ENCODE measurements at regions of chr5 and their contacts with region 1.

Region 1: DNA sequence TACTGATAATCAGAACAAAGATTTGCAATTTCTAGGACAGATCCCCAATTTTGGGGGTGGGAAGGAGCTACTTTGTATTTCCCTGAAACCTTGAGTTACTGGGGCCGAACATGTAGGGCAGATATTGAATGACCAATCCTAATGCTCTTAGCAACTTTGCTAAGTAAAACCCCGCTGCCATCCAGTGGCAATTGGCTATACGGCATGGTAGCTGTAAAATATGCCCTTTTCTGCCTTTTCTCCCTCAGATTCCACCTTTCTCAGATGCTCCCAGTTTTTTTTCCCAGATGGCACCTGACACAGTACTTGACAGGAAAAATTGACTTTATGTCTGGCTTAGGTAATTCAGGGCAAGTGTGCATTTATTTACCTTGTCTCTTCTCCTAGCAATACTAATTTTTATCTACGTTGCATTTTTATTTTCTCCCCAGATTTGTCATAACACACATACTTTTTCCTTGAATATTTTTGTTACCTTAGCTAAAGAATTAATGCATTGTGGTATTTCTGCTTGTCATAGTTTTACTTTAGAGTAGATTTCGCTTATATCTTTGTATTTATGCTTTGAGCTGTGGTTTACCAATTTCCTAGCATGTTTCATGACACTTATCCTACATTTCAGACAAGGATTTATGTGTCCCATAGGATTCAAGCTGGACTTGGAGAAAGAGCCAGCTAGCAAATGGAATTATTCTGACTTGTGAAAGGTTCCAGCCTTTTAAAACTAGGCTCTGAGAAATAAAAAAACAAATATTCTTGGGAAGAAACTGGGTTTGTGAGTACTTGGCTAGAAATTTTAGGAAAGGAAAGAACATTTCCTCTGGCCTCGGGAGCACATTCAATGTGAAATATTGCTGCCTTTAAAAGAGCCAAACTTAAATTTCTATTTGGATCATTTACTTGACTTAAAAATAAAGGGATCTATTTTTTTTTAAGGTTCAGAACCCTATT is 37.4 kb downstream of the PIK3R1 start:
- DNase-seq: peak; percentile 65
- ATAC-seq: peak; percentile 65
- H3K4me3 ChIP-seq: no peak overlapping the region
- H3K4me3 Mint-ChIP-seq: no peak overlapping the region
- H3K27ac ChIP-seq: no peak overlapping the region
- H3K27ac Mint-ChIP-seq: no peak overlapping the region
- H3K4me1 ChIP-seq: peaks cover 38% of the 10 kb centered on the region in 2 donors
- H3K4me1 Mint-ChIP-seq: peaks cover 78% of the 10 kb centered on the region
- H3K27me3 ChIP-seq: no peaks in the 10 kb centered on the region
- H3K27me3 Mint-ChIP-seq: no peaks in the 10 kb centered on the region
- CTCF ChIP-seq: peak; percentile 84

Region 2: DNA sequence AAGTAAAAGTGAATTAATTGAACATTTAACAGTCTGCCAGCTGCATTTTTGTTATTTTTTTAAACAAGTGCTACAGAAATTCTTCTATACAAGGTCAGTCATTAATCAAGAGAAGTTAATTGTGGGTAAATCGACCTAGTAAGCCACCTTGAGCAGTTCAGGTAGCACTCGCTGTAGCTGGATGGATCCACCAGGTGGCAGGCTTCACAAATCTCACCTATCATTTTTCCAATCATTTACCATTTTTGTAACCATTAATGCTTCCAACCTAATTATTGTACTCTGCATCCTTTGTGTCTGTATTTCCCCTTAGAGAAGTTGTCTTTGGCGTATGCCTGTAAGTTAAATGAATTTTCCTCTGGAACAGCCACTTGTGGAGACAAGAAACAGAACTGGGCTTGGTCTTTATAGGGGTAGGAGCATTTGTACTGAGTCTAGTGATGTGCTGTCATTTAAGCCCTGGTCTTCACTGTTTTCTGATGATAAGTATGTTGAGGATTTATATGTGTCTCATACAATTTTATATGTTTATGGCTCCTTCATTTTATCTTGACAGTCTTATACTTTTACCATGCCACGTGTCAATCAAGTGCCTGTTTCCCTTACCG is 1095.9 kb before region 1 on chr5:
- CTCF ChIA-PET with region 1: interaction called, 10 read pairs
- POLR2A ChIA-PET with region 1: no interaction called
- intact Hi-C with region 1: no loop called
- DNase-seq: peak; percentile 69
- ATAC-seq: peak; percentile 69
- H3K4me3 ChIP-seq: no peak overlapping the region
- H3K4me3 Mint-ChIP-seq: no peak overlapping the region
- H3K27ac ChIP-seq: no peak overlapping the region
- H3K27ac Mint-ChIP-seq: peak overlapping the region; percentile 46
- H3K4me1 ChIP-seq: peaks cover 3 to 6% of the 10 kb centered on the region in 2 donors
- H3K4me1 Mint-ChIP-seq: peaks cover 17% of the 10 kb centered on the region
- H3K27me3 ChIP-seq: no peaks in the 10 kb centered on the region
- H3K27me3 Mint-ChIP-seq: no peaks in the 10 kb centered on the region
- CTCF ChIP-seq: peak; percentile 95

Region 3: DNA sequence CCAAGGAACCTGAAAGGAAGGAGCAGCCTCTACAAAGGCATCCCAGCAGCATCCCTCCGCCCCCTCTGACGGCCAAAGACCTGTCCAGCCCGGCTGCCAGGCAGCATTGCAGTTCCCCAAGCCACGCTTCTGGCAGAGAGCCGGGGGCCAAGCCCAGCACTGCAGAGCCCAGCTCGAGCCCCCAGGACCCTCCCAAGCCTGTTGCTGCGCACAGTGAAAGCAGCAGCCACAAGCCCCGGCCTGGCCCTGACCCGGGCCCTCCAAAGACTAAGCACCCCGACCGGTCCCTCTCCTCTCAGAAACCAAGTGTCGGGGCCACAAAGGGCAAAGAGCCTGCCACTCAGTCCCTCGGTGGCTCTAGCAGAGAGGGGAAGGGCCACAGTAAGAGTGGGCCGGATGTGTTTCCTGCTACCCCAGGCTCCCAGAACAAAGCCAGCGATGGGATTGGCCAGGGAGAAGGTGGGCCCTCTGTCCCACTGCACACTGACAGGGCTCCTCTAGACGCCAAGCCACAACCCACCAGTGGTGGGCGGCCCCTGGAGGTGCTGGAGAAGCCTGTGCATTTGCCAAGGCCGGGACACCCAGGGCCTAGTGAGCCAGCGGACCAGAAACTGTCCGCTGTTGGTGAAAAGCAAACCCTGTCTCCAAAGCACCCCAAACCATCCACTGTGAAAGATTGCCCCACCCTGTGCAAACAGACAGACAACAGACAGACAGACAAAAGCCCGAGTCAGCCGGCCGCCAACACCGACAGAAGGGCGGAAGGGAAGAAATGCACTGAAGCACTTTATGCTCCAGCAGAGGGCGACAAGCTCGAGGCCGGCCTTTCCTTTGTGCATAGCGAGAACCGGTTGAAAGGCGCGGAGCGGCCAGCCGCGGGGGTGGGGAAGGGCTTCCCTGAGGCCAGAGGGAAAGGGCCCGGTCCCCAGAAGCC is 1087.2 kb before region 1 on chr5:
- CTCF ChIA-PET with region 1: no interaction called
- POLR2A ChIA-PET with region 1: no interaction called
- intact Hi-C with region 1: loop called (anchors 5 kb)
- DNase-seq: peak; percentile 87
- ATAC-seq: peak; percentile 83
- H3K4me3 ChIP-seq: peak overlapping the region in 4 of 5 experiments; percentile 38 to 63 (median 55)
- H3K4me3 Mint-ChIP-seq: peak overlapping the region; percentile 89
- H3K27ac ChIP-seq: peak overlapping the region; percentile 78 to 83
- H3K27ac Mint-ChIP-seq: peak overlapping the region; percentile 97
- H3K4me1 ChIP-seq: peaks cover 26 to 34% of the 10 kb centered on the region in 2 donors
- H3K4me1 Mint-ChIP-seq: peaks cover 27% of the 10 kb centered on the region
- H3K27me3 ChIP-seq: no peaks in the 10 kb centered on the region
- H3K27me3 Mint-ChIP-seq: no peaks in the 10 kb centered on the region
- CTCF ChIP-seq: peak; percentile 80

Region 4: DNA sequence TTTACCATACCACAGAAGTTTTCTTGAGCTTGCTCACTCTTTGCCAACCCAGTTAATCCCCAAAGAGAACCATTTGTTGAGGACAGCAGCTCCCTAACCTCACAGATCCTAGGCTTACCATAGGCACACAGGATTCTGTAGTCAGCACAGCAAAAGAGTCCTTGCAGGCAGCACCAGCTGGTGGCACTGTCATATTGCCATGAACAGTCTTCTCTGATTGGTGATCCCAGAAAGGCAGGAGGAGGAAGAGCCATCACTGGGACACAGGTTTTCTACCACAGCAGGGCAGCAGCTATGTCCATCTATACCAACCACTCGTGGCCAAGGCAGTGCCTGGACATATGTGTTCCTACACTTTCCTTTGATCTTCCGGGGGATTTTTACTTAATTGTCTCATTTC is 759.3 kb before region 1 on chr5:
- CTCF ChIA-PET with region 1: no interaction called
- POLR2A ChIA-PET with region 1: no interaction called
- intact Hi-C with region 1: loop called (anchors 1 kb)
- DNase-seq: no peak
- ATAC-seq: no peak
- H3K4me3 ChIP-seq: no peak overlapping the region
- H3K4me3 Mint-ChIP-seq: no peak overlapping the region
- H3K27ac ChIP-seq: no peak overlapping the region
- H3K27ac Mint-ChIP-seq: no peak overlapping the region
- H3K4me1 ChIP-seq: no peaks in the 10 kb centered on the region
- H3K4me1 Mint-ChIP-seq: no peaks in the 10 kb centered on the region
- H3K27me3 ChIP-seq: no peaks in the 10 kb centered on the region
- H3K27me3 Mint-ChIP-seq: no peaks in the 10 kb centered on the region
- CTCF ChIP-seq: no peak

Region 5: DNA sequence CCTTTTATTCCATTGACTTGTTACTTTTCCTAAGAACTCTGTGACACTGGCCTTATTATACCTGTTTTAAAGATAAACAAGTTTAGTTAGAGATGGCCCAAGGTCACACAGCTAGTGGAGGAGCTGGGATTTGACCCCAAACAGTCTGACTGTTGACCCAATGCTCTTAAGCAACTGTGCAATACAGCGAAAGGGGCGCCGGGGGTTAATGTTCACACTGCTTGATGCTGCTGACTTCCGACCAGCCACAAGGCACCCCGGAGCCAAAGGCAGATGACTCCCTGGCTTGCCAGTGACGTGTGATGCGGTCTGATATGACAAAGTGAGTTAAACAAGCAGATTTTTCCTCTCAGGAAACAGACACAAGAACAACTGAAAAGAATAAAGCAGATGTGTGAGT is 13.5 kb before region 1 on chr5:
- CTCF ChIA-PET with region 1: interaction called, 6 read pairs
- POLR2A ChIA-PET with region 1: no interaction called
- intact Hi-C with region 1: loop called (anchors 2 kb)
- DNase-seq: peak; percentile 85
- ATAC-seq: peak; percentile 85
- H3K4me3 ChIP-seq: peak overlapping the region in 1 of 5 experiments; percentile 23
- H3K4me3 Mint-ChIP-seq: peak overlapping the region; percentile 79
- H3K27ac ChIP-seq: peak overlapping the region; percentile 45 to 72
- H3K27ac Mint-ChIP-seq: peak overlapping the region; percentile 67
- H3K4me1 ChIP-seq: peaks cover 40 to 55% of the 10 kb centered on the region in 2 donors
- H3K4me1 Mint-ChIP-seq: peaks cover 74% of the 10 kb centered on the region
- H3K27me3 ChIP-seq: no peaks in the 10 kb centered on the region
- H3K27me3 Mint-ChIP-seq: no peaks in the 10 kb centered on the region
- CTCF ChIP-seq: no peak

Region 6: GRCh38 chr5:68272289-68272688 is 19.3 kb after region 1 on chr5:
- CTCF ChIA-PET with region 1: interaction called, 17 read pairs
- POLR2A ChIA-PET with region 1: no interaction called
- intact Hi-C with region 1: no loop called
- DNase-seq: peak; percentile 34
- ATAC-seq: no peak
- H3K4me3 ChIP-seq: no peak overlapping the region
- H3K4me3 Mint-ChIP-seq: no peak overlapping the region
- H3K27ac ChIP-seq: no peak overlapping the region
- H3K27ac Mint-ChIP-seq: no peak overlapping the region
- H3K4me1 ChIP-seq: peaks cover 14 to 22% of the 10 kb centered on the region in 2 donors
- H3K4me1 Mint-ChIP-seq: peaks cover 32% of the 10 kb centered on the region
- H3K27me3 ChIP-seq: no peaks in the 10 kb centered on the region
- H3K27me3 Mint-ChIP-seq: no peaks in the 10 kb centered on the region
- CTCF ChIP-seq: peak; percentile 67